ENCODE measurements at regions of chr11 and their contacts with region 1.

Region 1: DNA sequence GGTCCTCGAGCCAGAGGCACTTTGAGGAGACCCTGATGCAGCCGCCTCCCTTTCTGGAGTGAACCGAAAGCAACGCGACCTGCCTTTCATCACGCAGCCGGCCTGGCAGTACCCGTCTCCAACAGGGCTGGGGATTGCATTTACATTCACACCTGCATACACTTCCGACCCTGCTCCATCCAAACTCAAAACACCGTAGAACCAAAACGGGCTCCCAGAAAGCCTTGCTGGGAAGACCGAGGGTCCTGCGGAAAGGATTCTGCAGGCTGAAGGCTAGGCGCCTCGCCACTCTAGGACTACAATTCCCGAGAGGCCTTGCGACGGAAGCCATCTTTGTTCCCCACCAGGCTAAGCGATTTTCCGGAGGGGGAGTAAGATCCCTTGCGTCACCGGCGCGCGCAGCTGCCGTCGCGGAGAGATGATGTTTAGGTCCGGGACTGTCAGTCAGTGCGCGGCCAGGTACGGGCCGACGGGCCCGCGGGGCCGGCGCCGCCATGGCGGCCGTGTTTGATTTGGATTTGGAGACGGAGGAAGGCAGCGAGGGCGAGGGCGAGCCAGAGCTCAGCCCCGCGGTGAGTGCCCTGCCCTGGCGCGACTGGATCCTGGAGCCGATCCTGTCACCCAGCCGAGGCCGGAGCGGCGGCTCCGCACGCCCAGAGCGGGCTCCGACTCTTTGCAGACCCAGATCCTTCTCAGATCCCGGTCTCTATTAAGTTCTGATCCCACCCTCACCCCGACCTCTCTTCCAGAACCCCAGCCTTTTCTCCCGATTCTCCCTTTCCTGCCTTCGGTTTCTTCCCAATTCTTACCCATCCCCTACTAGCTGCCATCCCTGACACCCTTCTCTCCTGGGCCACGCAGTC is at the start of gene RPS6KB2:
- DNase-seq: peak; percentile 99
- ATAC-seq: peak; percentile 92 to 96 (median 94)
- H3K4me3 ChIP-seq: peak within 1 kb of the TSS; percentile 59 to 95 (median 86)
- H3K27ac ChIP-seq: peak within 1 kb of the TSS; percentile 38 to 96 (median 94)
- H3K4me1 ChIP-seq: peaks cover 0 to 27% (median 20%) of the 10 kb centered on the region in 9 donors
- H3K27me3 ChIP-seq: no peaks in the 10 kb centered on the region
- CTCF ChIP-seq: no peak
- total RNA-seq, gene RPS6KB2: 16.3 to 30.4 (median 20.8) TPM

Region 2: GRCh38 chr11:67371212-67371910 is 56.9 kb before region 1 on chr11:
- intact Hi-C with region 1: no loop called
- DNase-seq: no peak
- ATAC-seq: peak in 5 of 8 donors; percentile 4 to 31 (median 20)
- H3K4me3 ChIP-seq: peak overlapping the region in 6 of 10 donors; percentile 67 to 82 (median 76)
- H3K27ac ChIP-seq: peak overlapping the region in 4 of 10 donors; percentile 30 to 97 (median 93)
- H3K4me1 ChIP-seq: peaks cover 18 to 77% (median 43%) of the 10 kb centered on the region in 9 donors
- H3K27me3 ChIP-seq: peaks cover 0 to 5% (median 0%) of the 10 kb centered on the region in 7 donors
- CTCF ChIP-seq: peak in 8 of 9 donors; percentile 15 to 50 (median 42)

Region 3: DNA sequence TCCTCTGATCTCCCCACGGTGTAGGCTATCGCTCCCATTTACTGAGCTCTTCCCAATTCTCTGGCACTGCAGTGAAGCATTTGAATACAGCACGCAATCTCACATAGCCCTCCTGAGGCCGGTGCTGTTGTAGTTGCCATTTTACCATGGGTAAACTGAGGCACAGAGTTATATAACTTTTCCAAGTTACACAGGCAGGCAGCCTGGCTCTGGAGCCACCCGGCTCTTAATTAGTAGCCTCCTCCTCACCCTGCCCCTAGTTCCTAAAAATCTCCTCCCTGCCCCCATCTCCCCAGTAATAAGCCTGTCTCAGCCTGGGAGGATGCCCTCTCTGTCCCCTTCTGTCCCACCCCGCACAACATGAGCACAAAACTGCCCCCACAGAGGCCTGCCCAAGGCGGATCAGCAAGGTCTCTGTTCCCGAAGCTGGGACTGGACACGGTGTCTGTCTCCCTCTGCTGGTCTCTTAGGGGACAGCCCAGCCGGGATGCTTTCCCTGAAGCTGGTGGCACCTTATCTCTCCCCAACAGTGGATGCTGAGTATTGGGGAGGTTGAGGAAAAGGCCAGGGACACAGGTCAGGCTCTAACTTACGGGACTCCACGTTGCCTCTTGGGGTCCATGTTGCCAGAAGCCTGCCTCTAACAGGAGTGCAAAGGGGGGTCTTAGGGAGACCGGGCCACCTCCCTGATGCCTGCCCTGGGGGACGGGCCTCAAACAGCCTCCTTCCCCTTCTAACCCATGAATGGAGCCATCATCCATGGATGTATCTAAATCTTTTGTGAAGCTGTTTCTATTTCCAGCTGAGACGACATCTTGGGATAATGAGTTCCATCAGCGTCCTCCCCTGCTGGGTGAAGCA is 45.8 kb before region 1 on chr11:
- intact Hi-C with region 1: no loop called
- DNase-seq: peak; percentile 81
- ATAC-seq: peak; percentile 76 to 91 (median 88)
- H3K4me3 ChIP-seq: no peak overlapping the region
- H3K27ac ChIP-seq: no peak overlapping the region
- H3K4me1 ChIP-seq: peaks cover 0 to 44% (median 4%) of the 10 kb centered on the region in 9 donors
- H3K27me3 ChIP-seq: peaks cover 0 to 7% (median 0%) of the 10 kb centered on the region in 7 donors
- CTCF ChIP-seq: peak; percentile 92 to 99 (median 96)

Region 4: DNA sequence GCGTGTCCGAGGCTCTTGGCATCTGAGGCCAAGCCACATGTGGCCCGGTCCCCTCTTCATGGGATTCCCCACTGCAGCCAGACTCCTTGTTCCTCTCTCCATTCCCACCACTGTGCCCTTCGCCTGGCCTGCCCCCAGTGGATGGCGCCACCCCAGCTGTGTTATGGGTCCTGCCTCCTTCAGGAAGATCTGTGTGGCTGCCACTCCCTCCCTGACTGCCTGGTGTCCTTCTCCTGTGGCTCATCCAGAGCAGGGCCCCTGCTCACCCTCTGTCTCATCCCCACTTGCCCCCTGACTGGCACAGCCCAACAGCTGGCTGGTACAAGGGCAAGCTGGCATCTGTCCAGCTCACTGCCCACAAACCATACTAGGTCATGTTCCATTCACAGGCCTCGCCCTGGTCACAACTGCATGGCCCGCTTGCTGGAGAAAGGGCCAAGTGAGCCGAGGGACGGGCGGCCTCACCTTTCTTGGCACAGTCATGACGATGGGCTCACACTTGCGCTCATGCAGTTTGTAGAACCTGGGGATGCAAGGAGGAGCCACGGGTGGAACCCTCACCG is 11.1 kb after region 1 on chr11:
- intact Hi-C with region 1: loop called in 1 of 10 experiments (anchors 1 kb)
- DNase-seq: no peak
- ATAC-seq: peak in 2 of 8 donors; percentile 1 to 3
- H3K4me3 ChIP-seq: peak overlapping the region in 1 of 10 donors; percentile 59
- H3K27ac ChIP-seq: peak overlapping the region in 8 of 10 donors; percentile 28 to 93 (median 50)
- H3K4me1 ChIP-seq: peaks cover 14 to 66% (median 45%) of the 10 kb centered on the region in 9 donors
- H3K27me3 ChIP-seq: no peaks in the 10 kb centered on the region
- CTCF ChIP-seq: peak in 4 of 9 donors; percentile 14 to 23 (median 21)